ENCODE measurements at regions of chr15 and their contacts with region 1.

Region 1: DNA sequence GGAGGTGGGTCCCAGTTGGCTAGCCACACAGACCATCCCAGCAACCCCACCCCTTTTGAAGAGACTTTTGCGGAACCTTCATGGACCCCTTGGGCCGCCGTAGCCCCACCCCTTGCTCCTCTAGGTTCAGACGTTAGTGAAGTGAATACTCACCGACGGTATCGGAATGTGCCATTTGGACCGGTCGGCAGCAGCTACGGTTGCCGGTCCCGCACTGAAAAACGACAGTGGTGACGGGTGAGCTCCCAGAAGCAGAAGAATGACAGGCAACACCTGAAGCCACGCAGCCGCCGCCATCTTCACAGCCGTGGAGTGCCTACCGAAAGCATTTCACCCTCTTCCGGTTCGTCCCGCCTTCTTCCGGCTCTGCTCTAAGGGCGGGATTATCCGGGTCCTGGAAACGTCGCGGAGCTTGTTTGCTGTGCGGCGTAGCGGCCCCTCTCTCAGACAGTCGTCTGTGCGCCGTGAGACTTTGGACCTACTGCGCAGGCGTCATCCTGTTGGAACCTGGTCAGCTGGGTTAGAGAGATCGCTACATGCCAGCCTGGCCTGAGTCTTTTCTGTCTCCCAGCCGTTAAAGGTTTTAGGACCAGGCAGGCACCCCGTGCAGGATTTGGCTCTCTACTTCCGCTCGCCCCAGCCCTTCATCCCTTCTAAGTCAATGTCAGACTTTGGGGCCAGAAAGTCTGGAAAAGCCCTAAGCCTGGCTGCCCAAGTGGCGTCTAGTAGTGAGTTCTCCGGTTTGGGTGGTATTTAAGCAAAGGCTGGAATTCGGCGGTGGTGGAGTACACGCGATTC is at the starts of genes GANC and TMEM87A:
- DNase-seq: peak; percentile 98
- ATAC-seq: peak; percentile 96
- H3K4me3 Mint-ChIP-seq: peak within 1 kb of the TSS; percentile 81
- H3K27ac Mint-ChIP-seq: peak within 1 kb of the TSS; percentile 98
- H3K4me1 Mint-ChIP-seq: peaks cover 43% of the 10 kb centered on the region
- H3K27me3 Mint-ChIP-seq: no peaks in the 10 kb centered on the region
- total RNA-seq, gene GANC: 24.5 to 24.8 TPM
- total RNA-seq, gene TMEM87A: 20.5 to 29.0 TPM

Region 2: GRCh38 chr15:41660235-41661077 is 612.8 kb before region 1 on chr15 and contains the start of gene MGA:
- CTCF ChIA-PET with region 1: no interaction called
- POLR2A ChIA-PET with region 1: no interaction called
- intact Hi-C with region 1: loop called in 1 of 2 experiments (anchors 2 kb)
- DNase-seq: peak; percentile 94
- ATAC-seq: peak; percentile 89
- H3K4me3 Mint-ChIP-seq: peak within 1 kb of the TSS; percentile 92
- H3K27ac Mint-ChIP-seq: peak within 1 kb of the TSS; percentile 95
- H3K4me1 Mint-ChIP-seq: peaks cover 42% of the 10 kb centered on the region
- H3K27me3 Mint-ChIP-seq: peaks cover 7% of the 10 kb centered on the region
- total RNA-seq, gene MGA: 33.7 to 39.3 TPM

Region 3: GRCh38 chr15:42107473-42107872 is 165.8 kb before region 1 on chr15:
- CTCF ChIA-PET with region 1: no interaction called
- POLR2A ChIA-PET with region 1: no interaction called
- intact Hi-C with region 1: no loop called
- DNase-seq: peak; percentile 81
- ATAC-seq: peak; percentile 95
- H3K4me3 Mint-ChIP-seq: no peak overlapping the region
- H3K27ac Mint-ChIP-seq: peak overlapping the region; percentile 27
- H3K4me1 Mint-ChIP-seq: peaks cover 18% of the 10 kb centered on the region
- H3K27me3 Mint-ChIP-seq: peaks cover 24% of the 10 kb centered on the region

Region 4: DNA sequence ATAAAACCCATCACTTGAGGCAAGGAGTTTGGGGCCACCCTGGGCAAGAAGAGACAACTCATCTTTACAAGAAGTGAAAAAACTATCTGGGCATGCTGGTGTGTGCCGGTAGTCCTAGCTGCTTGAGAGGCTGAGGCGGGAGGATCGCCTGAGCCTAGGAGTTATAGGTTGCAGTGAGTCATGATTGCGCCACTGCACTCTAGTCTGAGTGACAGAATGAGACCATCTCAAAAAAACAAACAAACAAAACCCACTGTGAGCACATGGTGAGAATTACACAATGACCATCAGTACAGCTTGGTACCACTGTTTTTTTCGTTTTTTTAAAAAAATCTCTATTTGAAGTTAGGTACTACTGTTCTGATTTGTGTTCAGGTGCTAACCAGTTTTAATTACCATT is 78.8 kb before region 1 on chr15:
- CTCF ChIA-PET with region 1: interaction called, 3 read pairs
- POLR2A ChIA-PET with region 1: no interaction called
- intact Hi-C with region 1: loop called (anchors 1 to 5 kb)
- DNase-seq: peak; percentile 37
- ATAC-seq: peak; percentile 24
- H3K4me3 Mint-ChIP-seq: no peak overlapping the region
- H3K27ac Mint-ChIP-seq: peak overlapping the region; percentile 93
- H3K4me1 Mint-ChIP-seq: peaks cover 55% of the 10 kb centered on the region
- H3K27me3 Mint-ChIP-seq: no peaks in the 10 kb centered on the region

Region 5: GRCh38 chr15:42495361-42496212 is 222.3 kb after region 1 on chr15 and contains the start of gene SNAP23:
- CTCF ChIA-PET with region 1: no interaction called
- POLR2A ChIA-PET with region 1: no interaction called
- intact Hi-C with region 1: loop called in 1 of 2 experiments (anchors 1 kb)
- DNase-seq: peak; percentile 89
- ATAC-seq: peak; percentile 95
- H3K4me3 Mint-ChIP-seq: peak within 1 kb of the TSS; percentile 96
- H3K27ac Mint-ChIP-seq: peak within 1 kb of the TSS; percentile 97
- H3K4me1 Mint-ChIP-seq: peaks cover 68% of the 10 kb centered on the region
- H3K27me3 Mint-ChIP-seq: no peaks in the 10 kb centered on the region
- total RNA-seq, gene SNAP23: 45.5 to 77.5 TPM

Region 6: DNA sequence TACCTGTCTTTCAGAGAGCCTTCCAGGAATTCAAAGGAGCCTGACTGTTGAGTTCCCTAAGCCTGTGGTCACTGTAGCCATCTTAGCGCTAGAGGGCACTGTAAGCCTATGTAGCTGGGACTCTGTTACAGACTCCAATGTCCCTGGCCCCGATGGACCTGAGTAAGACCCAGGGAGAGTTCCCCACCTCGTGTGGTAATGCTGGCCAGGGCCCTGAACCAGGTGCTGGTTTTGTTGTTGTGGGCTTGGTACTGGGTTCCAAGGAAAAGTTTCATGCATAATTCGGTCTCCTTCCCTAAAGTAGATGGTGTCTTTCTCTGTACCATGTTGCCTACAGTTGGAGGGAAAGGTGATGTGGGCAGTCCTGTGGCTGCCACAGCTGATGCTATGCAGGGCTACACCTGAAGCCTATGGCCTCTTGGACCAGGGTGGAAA is 431.2 kb after region 1 on chr15:
- CTCF ChIA-PET with region 1: no interaction called
- POLR2A ChIA-PET with region 1: no interaction called
- intact Hi-C with region 1: no loop called
- DNase-seq: peak; percentile 78
- ATAC-seq: peak; percentile 98
- H3K4me3 Mint-ChIP-seq: no peak overlapping the region
- H3K27ac Mint-ChIP-seq: no peak overlapping the region
- H3K4me1 Mint-ChIP-seq: peaks cover 5% of the 10 kb centered on the region
- H3K27me3 Mint-ChIP-seq: no peaks in the 10 kb centered on the region

Region 7: DNA sequence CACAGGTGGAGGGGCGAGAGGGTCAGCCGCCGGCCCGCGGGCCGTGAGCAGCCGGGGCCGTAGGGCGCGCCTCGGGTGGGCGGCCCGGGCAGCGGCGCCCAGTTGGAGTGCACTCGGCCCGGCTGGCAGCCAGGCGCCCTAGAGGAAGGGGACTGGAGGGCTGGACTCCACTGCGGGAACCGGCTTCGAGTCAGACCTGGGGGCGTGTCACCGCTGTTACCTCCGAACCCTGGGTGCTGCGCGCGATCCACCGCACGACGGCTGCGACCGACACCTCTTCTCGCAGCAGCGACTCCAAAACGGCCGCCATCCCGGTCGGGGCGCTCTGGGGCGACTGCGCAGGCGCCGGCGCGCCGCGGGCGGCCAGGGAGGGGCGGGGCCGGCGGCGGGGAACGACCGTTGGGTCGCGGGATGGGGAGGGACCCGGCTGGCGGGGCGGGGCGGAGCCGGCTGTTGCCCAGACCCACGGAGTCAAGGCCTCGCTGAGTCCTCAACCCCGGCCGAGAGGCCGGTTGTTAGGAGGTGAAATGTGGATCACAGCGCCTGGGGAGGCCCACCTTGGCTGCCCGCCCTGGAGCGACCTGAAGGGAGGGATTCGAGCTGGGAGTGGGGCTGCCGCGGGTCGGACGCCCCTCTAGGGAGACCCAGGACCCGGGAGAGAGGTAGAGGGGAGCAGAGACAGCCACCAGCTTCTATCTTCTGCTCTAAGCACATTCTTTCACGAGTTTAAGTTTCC is 463.7 kb after region 1 on chr15 and contains the start of gene CDAN1:
- CTCF ChIA-PET with region 1: no interaction called
- POLR2A ChIA-PET with region 1: no interaction called
- intact Hi-C with region 1: loop called in 1 of 2 experiments (anchors 1 kb)
- DNase-seq: peak; percentile 96
- ATAC-seq: peak; percentile 94
- H3K4me3 Mint-ChIP-seq: peak within 1 kb of the TSS; percentile 76
- H3K27ac Mint-ChIP-seq: peak within 1 kb of the TSS; percentile 61
- H3K4me1 Mint-ChIP-seq: peaks cover 16% of the 10 kb centered on the region
- H3K27me3 Mint-ChIP-seq: no peaks in the 10 kb centered on the region
- total RNA-seq, gene CDAN1: 12.9 to 16.6 TPM

Region 8: GRCh38 chr15:43329960-43330779 is 1056.9 kb after region 1 on chr15 and contains the start of gene LCMT2:
- CTCF ChIA-PET with region 1: no interaction called
- POLR2A ChIA-PET with region 1: no interaction called
- intact Hi-C with region 1: loop called in 1 of 2 experiments (anchors 1 kb)
- DNase-seq: peak; percentile 93
- ATAC-seq: peak; percentile 91
- H3K4me3 Mint-ChIP-seq: peak within 1 kb of the TSS; percentile 91
- H3K27ac Mint-ChIP-seq: peak within 1 kb of the TSS; percentile 95
- H3K4me1 Mint-ChIP-seq: peaks cover 32% of the 10 kb centered on the region
- H3K27me3 Mint-ChIP-seq: no peaks in the 10 kb centered on the region
- total RNA-seq, gene LCMT2: 7.6 to 8.5 TPM

Measured in activated CD4-positive, alpha-beta T cell treated with anti-CD3 and anti-CD28 coated beads for 36 hours (primary cell).